ENCODE measurements at regions of chr4 and their contacts with region 1.

Region 1: DNA sequence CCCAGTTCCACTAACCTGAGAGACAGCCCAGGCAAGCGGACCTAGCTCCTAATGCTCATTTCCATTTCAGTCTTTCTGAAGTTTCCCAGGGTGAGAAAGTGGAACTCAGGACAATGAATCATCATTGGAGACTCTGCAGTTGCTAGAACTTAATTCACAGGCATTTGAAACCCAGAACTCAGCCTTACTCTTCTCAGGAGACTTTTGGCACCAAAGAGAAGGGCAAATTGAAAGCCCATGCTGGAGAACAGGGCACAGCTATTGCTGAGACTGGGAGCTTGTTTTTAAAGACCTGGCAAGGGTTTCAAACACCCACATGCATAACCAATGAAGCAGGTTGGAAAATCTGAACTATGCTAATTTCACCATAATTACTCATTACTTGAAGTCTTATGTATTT is 36.0 kb downstream of the BST1 start:
- DNase-seq: no peak
- H3K4me3 ChIP-seq: no peak overlapping the region
- H3K27ac ChIP-seq: no peak overlapping the region
- H3K4me1 ChIP-seq: peaks cover 0 to 8% (median 1%) of the 10 kb centered on the region in 4 experiments
- H3K27me3 ChIP-seq: no peaks in the 10 kb centered on the region

Region 2: GRCh38 chr4:14871676-14872430 is 867.0 kb before region 1 on chr4:
- CTCF ChIA-PET with region 1: no interaction called
- POLR2A ChIA-PET with region 1: no interaction called
- DNase-seq: peak; percentile 54 to 72 (median 65)
- H3K4me3 ChIP-seq: no peak overlapping the region
- H3K27ac ChIP-seq: no peak overlapping the region
- H3K4me1 ChIP-seq: peaks cover 0 to 4% (median 3%) of the 10 kb centered on the region in 4 experiments
- H3K27me3 ChIP-seq: peaks cover 0 to 4% (median 0%) of the 10 kb centered on the region in 5 experiments

Region 3: GRCh38 chr4:15749001-15749400 is 10.1 kb after region 1 on chr4:
- CTCF ChIA-PET with region 1: interaction called, 13 read pairs
- POLR2A ChIA-PET with region 1: no interaction called
- DNase-seq: no peak
- H3K4me3 ChIP-seq: no peak overlapping the region
- H3K27ac ChIP-seq: no peak overlapping the region
- H3K4me1 ChIP-seq: peaks cover 3 to 12% (median 7%) of the 10 kb centered on the region in 4 experiments
- H3K27me3 ChIP-seq: no peaks in the 10 kb centered on the region

Region 4: GRCh38 chr4:15756361-15756861 is 17.5 kb after region 1 on chr4:
- CTCF ChIA-PET with region 1: interaction called, 19 read pairs
- POLR2A ChIA-PET with region 1: no interaction called
- DNase-seq: peak; percentile 94 to 99 (median 98)
- H3K4me3 ChIP-seq: peak overlapping the region in 5 of 7 experiments; percentile 16 to 72 (median 43)
- H3K27ac ChIP-seq: peak overlapping the region; percentile 13 to 30
- H3K4me1 ChIP-seq: peaks cover 20 to 50% (median 36%) of the 10 kb centered on the region in 4 experiments
- H3K27me3 ChIP-seq: no peaks in the 10 kb centered on the region

Region 5: GRCh38 chr4:16245241-16245640 is 506.4 kb after region 1 on chr4:
- CTCF ChIA-PET with region 1: no interaction called
- POLR2A ChIA-PET with region 1: no interaction called
- DNase-seq: no peak
- H3K4me3 ChIP-seq: no peak overlapping the region
- H3K27ac ChIP-seq: no peak overlapping the region
- H3K4me1 ChIP-seq: no peaks in the 10 kb centered on the region
- H3K27me3 ChIP-seq: no peaks in the 10 kb centered on the region